Heart right ventricle (tissue), 16 donors: ENCODE measurements at regions of chr5 and their contacts with region 1.

Region 1: DNA sequence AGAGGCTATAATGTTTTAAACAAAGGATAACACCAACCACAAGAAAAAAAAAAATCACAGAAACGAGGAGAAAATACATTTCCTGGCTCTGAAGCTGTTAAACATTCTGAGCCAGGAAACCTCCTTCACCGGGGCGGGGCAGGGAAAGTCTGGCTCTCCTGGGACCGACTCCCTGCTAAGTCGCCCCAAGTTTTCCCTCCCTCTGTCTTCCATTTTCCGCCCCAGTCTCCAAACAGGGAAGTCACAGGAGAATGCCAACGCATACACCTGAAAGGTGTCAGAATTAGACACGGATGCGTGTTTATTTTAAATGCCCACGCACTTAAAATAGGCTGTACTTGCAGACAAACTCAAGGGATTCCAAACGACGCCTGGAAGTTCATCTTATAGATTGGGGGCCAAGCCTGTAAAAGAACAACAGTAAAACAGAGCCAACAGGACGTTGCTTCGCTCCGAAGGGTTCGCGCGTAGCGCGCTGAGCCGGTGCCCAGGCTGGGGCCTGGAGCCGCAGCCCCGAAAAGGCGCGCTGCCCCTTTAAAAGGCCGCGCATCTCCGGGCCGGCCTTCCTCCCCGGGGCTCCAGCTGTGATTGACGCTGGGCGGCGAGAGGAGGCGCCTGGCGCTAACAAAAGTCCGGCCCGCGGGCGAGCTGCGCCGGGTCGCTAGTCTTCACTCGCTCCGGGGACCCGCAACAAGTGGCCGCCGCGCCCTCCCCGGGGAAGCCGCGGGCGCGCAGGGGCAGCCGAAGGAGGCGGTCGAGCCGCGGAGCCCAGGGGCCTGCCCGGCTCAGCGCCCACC is at the start of gene FBXL7:
- DNase-seq: peak; percentile 86 to 87
- ATAC-seq: peak; percentile 88 to 94 (median 92)
- H3K4me3 ChIP-seq: peak within 1 kb of the TSS; percentile 71 to 96 (median 82)
- H3K27ac ChIP-seq: peak within 1 kb of the TSS; percentile 83 to 97 (median 90)
- H3K4me1 ChIP-seq: peaks cover 3 to 35% (median 26%) of the 10 kb centered on the region in 9 donors
- H3K27me3 ChIP-seq: peaks cover 0 to 26% (median 0%) of the 10 kb centered on the region in 7 donors
- CTCF ChIP-seq: peak in 7 of 9 donors; percentile 6 to 62 (median 39)
- total RNA-seq, gene FBXL7: 10.5 to 33.4 (median 23.6) TPM

Region 2: DNA sequence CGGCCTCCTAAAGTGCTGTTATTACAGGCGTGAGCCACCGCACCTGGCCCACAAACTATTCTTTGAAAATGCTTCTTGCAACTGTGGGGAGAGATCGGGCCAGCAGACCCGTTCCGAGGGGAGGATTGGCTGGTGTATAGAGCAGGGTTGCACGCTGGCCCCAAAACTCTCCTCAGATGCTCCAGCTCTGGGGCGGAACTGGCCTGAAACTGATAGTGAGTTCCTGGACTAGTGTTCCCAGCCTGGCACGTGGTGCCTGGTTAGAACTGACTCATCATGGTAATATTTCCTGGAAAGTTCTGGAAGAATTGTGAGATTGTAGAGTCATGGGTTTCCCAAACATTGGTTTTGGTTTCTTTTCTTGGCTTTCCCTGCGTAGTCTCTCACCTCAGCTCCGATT is 120.8 kb after region 1 on chr5:
- intact Hi-C with region 1: loop called in 1 of 10 experiments (anchors 10 kb)
- DNase-seq: no peak
- ATAC-seq: peak in 7 of 8 donors; percentile 20 to 75 (median 48)
- H3K4me3 ChIP-seq: no peak overlapping the region
- H3K27ac ChIP-seq: peak overlapping the region in 2 of 10 donors; percentile 17 to 56
- H3K4me1 ChIP-seq: peaks cover 0 to 53% (median 21%) of the 10 kb centered on the region in 9 donors
- H3K27me3 ChIP-seq: no peaks in the 10 kb centered on the region
- CTCF ChIP-seq: no peak

Region 3: DNA sequence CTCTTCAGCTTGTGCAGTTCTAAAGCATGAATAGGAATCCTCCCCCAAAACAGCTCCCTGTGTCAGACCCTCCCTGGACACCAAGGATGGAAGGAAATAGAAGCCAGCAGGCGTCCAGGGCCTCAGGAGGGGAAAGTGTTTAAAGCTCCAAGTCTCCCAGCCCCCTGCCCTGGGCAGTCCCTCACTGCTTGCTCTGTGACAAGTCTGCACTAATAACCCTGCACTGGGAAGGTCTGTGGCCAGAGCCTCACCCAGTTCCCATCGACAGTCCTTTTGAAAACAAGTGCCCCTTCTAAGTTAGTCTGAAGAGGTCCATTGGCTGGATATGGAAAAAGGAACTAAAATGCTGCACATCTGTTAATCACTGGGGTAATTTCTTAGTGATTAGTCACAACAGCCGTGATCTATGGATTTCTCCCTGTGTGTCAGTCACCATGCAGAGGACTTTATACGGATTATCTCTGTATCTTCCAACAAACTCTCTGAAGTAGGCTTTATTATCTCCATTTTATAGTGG is 195.5 kb after region 1 on chr5:
- intact Hi-C with region 1: no loop called
- DNase-seq: no peak
- ATAC-seq: peak in 7 of 8 donors; percentile 17 to 61 (median 42)
- H3K4me3 ChIP-seq: no peak overlapping the region
- H3K27ac ChIP-seq: peak overlapping the region in 7 of 10 donors; percentile 2 to 43 (median 27)
- H3K4me1 ChIP-seq: peaks cover 4 to 72% (median 37%) of the 10 kb centered on the region in 9 donors
- H3K27me3 ChIP-seq: no peaks in the 10 kb centered on the region
- CTCF ChIP-seq: no peak

Region 4: DNA sequence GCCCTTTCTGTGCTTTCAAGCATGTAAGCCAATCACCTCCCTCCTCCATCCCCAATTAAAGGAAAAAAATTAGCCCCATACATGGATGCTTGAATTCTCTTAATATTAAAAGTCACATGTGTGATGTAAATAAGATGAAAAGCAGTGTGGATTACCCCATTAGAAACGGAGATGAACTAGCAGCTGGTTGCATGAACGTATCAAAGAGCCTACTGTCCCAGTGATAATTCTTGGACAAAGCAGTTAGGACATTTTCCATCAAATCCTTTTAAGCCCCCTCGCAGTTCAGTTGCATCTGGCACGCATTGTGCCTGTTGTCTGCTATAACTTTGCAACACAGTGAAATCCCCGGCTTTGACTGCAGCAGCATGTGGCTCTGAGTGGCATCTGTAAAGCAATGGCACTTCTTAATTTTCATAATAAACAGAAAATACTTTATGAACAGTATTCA is 285.8 kb after region 1 on chr5:
- intact Hi-C with region 1: loop called in 7 of 10 experiments (anchors 5 to 10 kb)
- DNase-seq: no peak
- ATAC-seq: no peak
- H3K4me3 ChIP-seq: no peak overlapping the region
- H3K27ac ChIP-seq: peak overlapping the region in 2 of 10 donors; percentile 8 to 66
- H3K4me1 ChIP-seq: peaks cover 0 to 46% (median 27%) of the 10 kb centered on the region in 9 donors
- H3K27me3 ChIP-seq: no peaks in the 10 kb centered on the region
- CTCF ChIP-seq: no peak

Region 5: DNA sequence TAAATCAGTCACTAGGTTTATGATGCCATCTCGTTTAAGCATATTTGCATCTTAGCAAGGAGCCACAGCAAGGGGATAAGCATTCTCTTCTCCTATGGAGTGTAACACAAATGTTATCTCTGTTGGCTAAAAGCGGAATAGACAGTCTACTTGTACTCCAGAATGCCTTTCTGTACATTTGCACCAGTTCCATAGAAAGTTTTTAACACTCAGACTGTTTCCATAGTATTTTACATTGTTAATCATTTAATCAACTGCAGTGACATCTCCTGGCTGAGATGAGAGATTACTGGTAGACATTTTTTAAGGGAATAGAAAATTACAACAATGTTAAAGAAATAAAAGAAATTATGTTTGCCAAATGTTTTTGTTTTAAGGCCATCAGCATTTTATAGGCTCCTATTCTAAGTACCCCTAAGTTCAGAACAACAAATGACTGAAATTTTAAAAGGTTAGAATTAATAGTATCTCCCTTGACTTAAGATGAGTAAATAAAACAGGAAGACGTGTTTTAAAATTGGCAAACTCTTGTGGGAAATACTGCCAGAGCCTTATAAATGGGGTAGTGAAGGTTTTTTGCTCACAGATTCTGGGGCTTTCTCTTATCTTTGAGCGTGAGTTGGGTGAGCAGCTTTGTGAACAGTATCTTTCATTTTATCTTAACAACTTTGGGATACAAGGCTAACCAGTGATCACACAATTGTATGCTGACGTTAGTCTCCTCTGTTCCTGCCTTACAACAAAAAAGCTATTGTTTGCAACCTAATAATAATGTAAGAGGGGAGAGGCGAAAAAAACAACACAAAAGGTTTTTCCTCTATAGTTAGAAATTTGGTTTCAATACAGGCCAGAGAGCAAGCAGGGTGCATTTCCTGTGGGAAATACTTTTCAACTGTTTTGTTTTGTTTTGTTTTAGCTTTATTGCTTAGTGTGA is 294.6 kb after region 1 on chr5:
- intact Hi-C with region 1: loop called in 8 of 10 experiments (anchors 5 to 10 kb)
- DNase-seq: no peak
- ATAC-seq: peak in 5 of 8 donors; percentile 25 to 73 (median 67)
- H3K4me3 ChIP-seq: no peak overlapping the region
- H3K27ac ChIP-seq: peak overlapping the region in 9 of 10 donors; percentile 15 to 69 (median 49)
- H3K4me1 ChIP-seq: peaks cover 5 to 90% (median 73%) of the 10 kb centered on the region in 9 donors
- H3K27me3 ChIP-seq: no peaks in the 10 kb centered on the region
- CTCF ChIP-seq: peak in 7 of 9 donors; percentile 27 to 60 (median 43)

Region 6: GRCh38 chr5:15948190-15948589 is 448.5 kb after region 1 on chr5:
- intact Hi-C with region 1: no loop called
- DNase-seq: no peak
- ATAC-seq: no peak
- H3K4me3 ChIP-seq: no peak overlapping the region
- H3K27ac ChIP-seq: no peak overlapping the region
- H3K4me1 ChIP-seq: peaks cover 0 to 7% (median 0%) of the 10 kb centered on the region in 9 donors
- H3K27me3 ChIP-seq: no peaks in the 10 kb centered on the region
- CTCF ChIP-seq: peak in 3 of 9 donors; percentile 27 to 44 (median 28)